Panc1 (cell line): ENCODE measurements at regions of chr19 and their contacts with region 1.

Region 1: DNA sequence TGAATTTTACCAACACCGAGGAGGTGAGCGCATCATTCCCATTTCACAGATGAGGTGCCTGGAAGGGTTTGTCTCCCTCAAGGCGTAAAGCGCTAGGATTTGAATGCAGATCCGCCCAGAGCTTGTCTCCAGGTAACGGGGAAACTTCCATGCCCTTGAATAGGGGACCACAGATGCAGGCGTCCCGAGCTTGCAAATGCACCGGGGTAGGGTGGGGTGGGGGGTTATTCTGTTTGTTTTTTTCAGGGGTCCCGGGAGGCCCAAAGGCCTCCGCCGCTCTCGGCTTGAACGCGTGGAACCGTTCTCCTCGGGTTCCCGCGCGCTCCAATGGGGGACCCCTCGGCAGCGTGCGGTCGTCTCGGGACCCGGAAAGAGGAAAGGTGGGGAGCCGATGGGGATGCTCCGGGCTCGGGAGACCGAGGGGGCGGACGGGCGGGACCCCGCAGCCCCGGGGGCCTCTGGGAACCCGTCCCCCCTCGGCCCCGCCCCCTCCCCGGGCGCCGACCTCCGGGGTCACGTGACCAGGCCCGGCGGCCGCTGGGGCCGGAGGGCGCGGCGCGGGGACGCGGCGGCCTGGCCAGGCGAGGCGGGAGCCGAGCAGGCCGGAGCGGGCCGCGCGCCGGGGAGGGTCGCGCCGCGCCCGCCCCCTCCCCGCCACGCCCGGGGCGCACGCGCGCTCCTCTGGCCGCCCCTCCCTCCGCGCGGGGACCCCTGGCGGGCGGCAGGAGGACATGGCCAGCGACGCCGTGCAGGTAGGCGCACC is at the start of gene PKN1:
- DNase-seq: no peak
- ATAC-seq: peak; percentile 62
- H3K4me3 ChIP-seq: peak within 1 kb of the TSS; percentile 64 to 65
- H3K27ac ChIP-seq: peak within 1 kb of the TSS; percentile 82
- H3K4me1 ChIP-seq: peaks cover 8% of the 10 kb centered on the region
- H3K27me3 ChIP-seq: no peaks in the 10 kb centered on the region
- CTCF ChIP-seq: no peak; the same call in 1 of the 2 replicates
- total RNA-seq, gene PKN1: 205 TPM

Region 2: GRCh38 chr19:14325863-14326262 is 107.1 kb before region 1 on chr19:
- CTCF ChIA-PET with region 1: no interaction called
- POLR2A ChIA-PET with region 1: interaction called, 10 read pairs
- in situ Hi-C with region 1: no loop called
- intact Hi-C with region 1: no loop called
- DNase-seq: no peak
- ATAC-seq: no peak
- H3K4me3 ChIP-seq: no peak overlapping the region
- H3K27ac ChIP-seq: no peak overlapping the region
- H3K4me1 ChIP-seq: no peaks in the 10 kb centered on the region
- H3K27me3 ChIP-seq: no peaks in the 10 kb centered on the region
- CTCF ChIP-seq: no peak

Region 3: GRCh38 chr19:14419106-14419813 is 13.7 kb before region 1 on chr19 and contains the start of gene DDX39A:
- CTCF ChIA-PET with region 1: no interaction called
- POLR2A ChIA-PET with region 1: no interaction called
- in situ Hi-C with region 1: no loop called
- intact Hi-C with region 1: no loop called
- DNase-seq: peak; percentile 93
- ATAC-seq: peak; percentile 96
- H3K4me3 ChIP-seq: peak within 1 kb of the TSS; percentile 76 to 85
- H3K27ac ChIP-seq: peak within 1 kb of the TSS; percentile 97
- H3K4me1 ChIP-seq: peaks cover 12% of the 10 kb centered on the region
- H3K27me3 ChIP-seq: no peaks in the 10 kb centered on the region
- CTCF ChIP-seq: no peak
- total RNA-seq, gene DDX39A: 117 TPM

Region 4: GRCh38 chr19:14536926-14537692 is 104.1 kb after region 1 on chr19:
- CTCF ChIA-PET with region 1: no interaction called
- POLR2A ChIA-PET with region 1: no interaction called
- in situ Hi-C with region 1: no loop called
- intact Hi-C with region 1: no loop called
- DNase-seq: no peak
- ATAC-seq: peak; percentile 84
- H3K4me3 ChIP-seq: peak overlapping the region in 1 of 2 experiments; percentile 31; a peak in 2 of 4 replicates
- H3K27ac ChIP-seq: no peak overlapping the region
- H3K4me1 ChIP-seq: peaks cover 13% of the 10 kb centered on the region
- H3K27me3 ChIP-seq: no peaks in the 10 kb centered on the region
- CTCF ChIP-seq: no peak